Posterior vena cava (tissue), 2 donors: ENCODE measurements at regions of chrX and their contacts with region 1.

Region 1: DNA sequence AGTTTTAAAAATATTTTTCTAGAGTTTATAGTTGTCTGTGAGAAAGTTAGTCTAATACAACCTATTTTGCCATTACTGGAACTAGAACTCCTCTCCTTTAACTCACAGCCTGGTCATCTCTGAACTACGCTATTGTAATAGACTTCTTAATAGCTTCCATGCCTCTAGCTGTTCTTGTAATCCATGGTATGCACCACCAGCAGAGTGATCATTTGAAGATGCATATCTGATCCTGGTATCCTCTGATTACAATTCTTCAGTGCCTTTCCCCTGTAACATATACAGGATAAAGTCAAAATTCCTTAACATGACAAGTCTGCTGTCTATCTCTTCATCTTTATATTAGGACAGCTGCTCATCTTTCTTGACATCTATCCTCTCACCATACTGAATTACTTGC is 37.6 kb upstream of the NALF2 start:
- DNase-seq: no peak

Region 2: GRCh38 chrX:69493193-69493592 is 26.6 kb after region 1 on chrX:
- intact Hi-C with region 1: no loop called
- DNase-seq: no peak

Region 3: DNA sequence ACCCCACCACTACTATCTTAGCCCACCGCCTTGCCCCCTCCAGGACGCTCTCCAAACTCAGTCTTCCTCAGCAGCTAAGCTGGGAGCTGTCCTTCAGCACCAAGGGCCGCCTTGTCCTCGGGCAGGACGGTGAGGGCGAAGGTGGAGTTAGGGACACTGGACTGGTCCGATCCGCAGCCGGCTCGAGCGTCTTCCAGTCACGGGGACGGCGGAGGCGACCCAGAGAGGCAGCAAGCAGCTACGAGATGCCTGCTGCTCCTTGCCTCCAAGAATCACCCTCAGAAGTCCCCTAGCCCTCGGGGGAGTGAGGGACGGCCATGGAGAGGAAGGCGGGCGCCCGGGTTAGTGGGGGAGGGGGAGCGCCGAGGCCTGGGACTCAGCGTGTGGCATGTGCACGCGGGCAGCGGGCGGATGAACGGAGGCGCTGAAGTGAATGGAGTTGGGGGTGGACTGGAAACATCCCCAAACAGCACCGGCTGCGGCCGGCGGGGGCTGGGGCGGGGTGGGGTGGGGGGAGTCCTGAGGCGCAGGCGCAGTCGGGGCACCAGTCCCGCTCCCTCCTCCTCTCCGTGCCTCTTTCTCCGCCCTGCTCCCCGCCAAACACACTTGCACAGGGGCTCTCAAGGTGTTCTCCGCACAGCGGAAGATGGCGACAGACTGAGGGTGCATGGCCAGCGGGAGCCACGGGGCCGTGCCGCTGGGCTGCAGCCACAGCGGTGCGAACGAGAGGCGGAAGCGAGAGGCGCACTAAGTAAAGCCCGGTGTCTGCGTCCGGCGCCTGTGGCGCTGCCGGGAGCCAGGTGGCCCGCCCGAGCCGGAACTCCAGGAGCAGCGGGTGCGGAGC is 37.5 kb after region 1 on chrX and contains the start of gene NALF2:
- intact Hi-C with region 1: no loop called
- DNase-seq: peak; percentile 87
- total RNA-seq, gene NALF2: 0.23 to 0.48 TPM

Region 4: DNA sequence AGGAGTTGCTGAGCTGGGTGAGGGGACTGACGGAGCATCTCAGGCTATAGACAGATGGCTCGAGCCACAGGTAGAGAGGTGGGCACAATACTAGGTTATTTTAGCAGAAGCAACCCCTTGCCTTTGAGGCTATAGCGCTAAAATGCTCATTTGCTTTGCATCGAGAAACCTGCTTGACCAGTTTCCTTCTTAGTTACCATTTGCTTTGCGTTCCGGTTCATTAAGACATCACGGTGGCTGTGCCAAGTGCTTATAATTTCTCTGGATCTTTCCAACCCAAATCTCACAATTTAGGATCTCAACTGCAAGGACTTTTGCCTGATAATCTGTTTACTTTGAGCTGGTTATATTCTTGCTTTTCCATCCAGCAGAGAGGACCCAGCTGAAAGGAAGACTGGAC is 1018.9 kb after region 1 on chrX:
- intact Hi-C with region 1: no loop called
- DNase-seq: no peak

Region 5: GRCh38 chrX:70577442-70577841 is 1110.9 kb after region 1 on chrX:
- intact Hi-C with region 1: loop called in 1 of 2 experiments (anchors 10 kb)
- DNase-seq: no peak